Mammary epithelial cell (primary cell): ENCODE measurements at regions of chr5 and their contacts with region 1.

Region 1: DNA sequence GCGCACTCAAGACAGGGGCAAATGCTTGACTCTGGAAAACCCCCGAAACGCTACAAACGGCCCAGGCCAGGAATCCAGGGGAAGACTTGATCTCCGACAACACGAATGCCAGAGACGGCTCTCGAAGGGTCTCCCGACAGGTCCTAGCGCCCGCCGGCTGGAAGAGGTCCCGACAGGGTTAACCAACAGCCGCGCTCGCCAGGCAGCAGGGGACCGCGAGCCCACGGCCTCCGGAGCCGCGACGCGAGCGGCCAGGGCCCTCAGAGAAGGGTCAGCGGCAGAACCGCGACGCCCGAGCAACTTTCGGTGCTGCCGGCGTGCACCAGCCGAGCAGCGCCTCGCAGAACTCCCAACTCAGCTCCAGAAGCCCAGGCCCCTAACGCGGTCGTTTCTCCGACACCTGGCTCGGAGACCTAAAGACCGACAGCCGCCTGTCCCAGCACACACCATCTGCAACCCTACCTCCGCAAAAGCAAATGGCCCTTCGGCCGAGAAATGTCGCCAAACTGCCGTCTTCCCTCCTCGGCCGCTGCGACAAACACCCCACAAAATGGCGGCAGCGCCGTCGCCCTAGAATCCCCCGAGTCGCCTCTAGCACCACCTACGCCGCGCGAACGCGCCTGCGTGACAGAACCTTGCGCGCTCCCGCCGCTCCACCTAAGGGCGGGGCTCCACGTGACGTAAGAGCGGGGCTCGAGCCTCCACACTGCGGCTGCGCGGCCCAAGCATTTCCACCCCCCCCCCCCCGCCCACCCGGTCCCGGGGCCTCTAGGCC is at the start of gene CLK4:
- DNase-seq: peak; percentile 88
- H3K4me3 ChIP-seq: peak within 1 kb of the TSS; percentile 62 to 96 (median 86)
- H3K27ac ChIP-seq: peak within 1 kb of the TSS; percentile 89
- H3K4me1 ChIP-seq: peaks cover 11% of the 10 kb centered on the region
- H3K27me3 ChIP-seq: no peaks in the 10 kb centered on the region
- CTCF ChIP-seq: no peak
- total RNA-seq, gene CLK4: 17.5 to 31.7 TPM

Region 2: DNA sequence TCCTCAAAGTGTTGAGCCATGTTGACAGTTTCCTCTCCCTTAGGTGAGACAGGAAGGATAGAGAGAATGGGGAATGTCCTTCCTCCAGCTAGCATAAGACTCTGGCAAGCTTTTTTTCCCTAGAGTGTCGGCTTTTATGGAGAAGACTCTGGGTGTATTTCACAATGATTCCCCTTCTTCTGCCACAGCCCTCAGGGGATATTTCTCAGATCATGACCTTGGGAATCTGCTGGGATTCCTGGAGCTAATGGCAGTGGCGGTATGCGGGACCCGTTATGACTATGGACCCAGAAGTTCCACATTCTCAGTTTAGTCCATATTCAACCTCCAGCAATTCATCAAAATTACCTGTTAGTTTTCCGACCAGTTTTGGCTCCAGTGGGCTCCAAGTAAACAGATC is 79.9 kb after region 1 on chr5:
- CTCF ChIA-PET with region 1: interaction called, 3 read pairs
- dilution Hi-C with region 1: no loop called
- in situ Hi-C with region 1: no loop called
- intact Hi-C with region 1: loop called (anchors 5 kb)
- DNase-seq: no peak
- H3K4me3 ChIP-seq: no peak overlapping the region
- H3K27ac ChIP-seq: no peak overlapping the region
- H3K4me1 ChIP-seq: no peaks in the 10 kb centered on the region
- H3K27me3 ChIP-seq: no peaks in the 10 kb centered on the region
- CTCF ChIP-seq: no peak

Region 3: DNA sequence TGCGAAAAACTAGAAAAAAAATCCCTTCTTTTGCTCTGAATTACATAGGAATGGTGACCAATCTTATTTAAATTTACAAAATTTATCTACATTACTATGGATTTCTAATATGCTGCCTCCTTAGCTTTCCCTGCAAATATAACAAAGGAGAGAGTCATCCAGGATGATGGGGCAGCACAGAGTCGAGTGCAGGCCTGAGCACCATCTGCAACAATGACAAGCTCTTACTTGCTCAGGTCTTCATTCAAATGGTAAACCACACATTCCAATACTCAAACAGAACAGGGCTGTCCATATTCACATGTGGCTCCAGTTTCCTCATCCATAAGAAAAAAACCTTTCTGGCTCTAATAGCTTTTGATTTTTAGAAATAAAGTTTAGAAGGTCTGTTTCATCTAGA is 199.5 kb after region 1 on chr5:
- CTCF ChIA-PET with region 1: no interaction called
- dilution Hi-C with region 1: no loop called
- in situ Hi-C with region 1: no loop called
- intact Hi-C with region 1: loop called (anchors 5 kb)
- DNase-seq: peak; percentile 88
- H3K4me3 ChIP-seq: no peak overlapping the region
- H3K27ac ChIP-seq: peak overlapping the region; percentile 55
- H3K4me1 ChIP-seq: peaks cover 18% of the 10 kb centered on the region
- H3K27me3 ChIP-seq: no peaks in the 10 kb centered on the region
- CTCF ChIP-seq: no peak